Caco-2 (cell line): ENCODE measurements at regions of chr1 and their contacts with region 1.

Region 1: GRCh38 chr1:151803164-151803563 is 2.1 kb downstream of the LINGO4 start:
- DNase-seq: no peak
- H3K4me3 ChIP-seq: no peak overlapping the region
- H3K4me3 Mint-ChIP-seq: no peak overlapping the region
- H3K27ac Mint-ChIP-seq: no peak overlapping the region
- H3K4me1 ChIP-seq: no peaks in the 10 kb centered on the region
- H3K4me1 Mint-ChIP-seq: no peaks in the 10 kb centered on the region
- H3K27me3 ChIP-seq: no peaks in the 10 kb centered on the region; the same call in 1 of the 2 replicates
- H3K27me3 Mint-ChIP-seq: peaks cover 9% of the 10 kb centered on the region
- CTCF ChIP-seq: no peak

Region 2: DNA sequence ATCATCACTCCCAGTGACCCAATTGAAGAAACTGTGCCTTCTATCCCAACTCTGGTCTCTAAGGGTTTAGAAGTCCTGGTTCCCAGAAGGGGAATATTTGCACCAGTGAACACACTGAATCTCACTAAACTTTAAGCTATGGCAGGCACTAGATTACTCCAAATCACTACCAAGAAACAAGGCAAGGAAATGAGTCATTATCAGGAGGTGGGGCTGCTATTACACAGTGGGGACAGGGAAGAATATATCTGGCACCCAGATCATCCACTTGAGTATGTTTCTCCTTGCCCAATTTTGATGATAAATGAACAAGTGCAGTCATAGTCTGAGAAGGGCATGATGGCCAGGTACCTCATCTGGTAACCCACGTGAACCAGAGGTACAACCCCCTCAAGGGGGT is 46.9 kb before region 1 on chr1:
- CTCF ChIA-PET with region 1: no interaction called
- POLR2A ChIA-PET with region 1: no interaction called
- intact Hi-C with region 1: no loop called
- DNase-seq: no peak
- H3K4me3 ChIP-seq: no peak overlapping the region
- H3K4me3 Mint-ChIP-seq: no peak overlapping the region
- H3K27ac Mint-ChIP-seq: no peak overlapping the region
- H3K4me1 ChIP-seq: no peaks in the 10 kb centered on the region
- H3K4me1 Mint-ChIP-seq: no peaks in the 10 kb centered on the region
- H3K27me3 ChIP-seq: no peaks in the 10 kb centered on the region
- H3K27me3 Mint-ChIP-seq: no peaks in the 10 kb centered on the region
- CTCF ChIP-seq: no peak

Region 3: GRCh38 chr1:151853411-151853943 is 50.3 kb after region 1 on chr1 and contains the start of gene THEM5:
- CTCF ChIA-PET with region 1: no interaction called
- POLR2A ChIA-PET with region 1: no interaction called
- intact Hi-C with region 1: loop called (anchors 5 kb)
- DNase-seq: no peak
- H3K4me3 ChIP-seq: no peak within 1 kb of the TSS
- H3K4me3 Mint-ChIP-seq: no peak within 1 kb of the TSS
- H3K27ac Mint-ChIP-seq: no peak within 1 kb of the TSS
- H3K4me1 ChIP-seq: no peaks in the 10 kb centered on the region
- H3K4me1 Mint-ChIP-seq: no peaks in the 10 kb centered on the region
- H3K27me3 ChIP-seq: no peaks in the 10 kb centered on the region
- H3K27me3 Mint-ChIP-seq: no peaks in the 10 kb centered on the region
- CTCF ChIP-seq: no peak
- total RNA-seq, gene THEM5: not detected in 2 replicates